GM10248 (cell line): ENCODE measurements at regions of chr3 and their contacts with region 1.

Region 1: GRCh38 chr3:191269289-191270085 is 59.7 kb upstream of the CCDC50 start:
- DNase-seq: peak; percentile 37
- CTCF ChIP-seq: no peak

Region 2: GRCh38 chr3:191282262-191283215 is 13.1 kb after region 1 on chr3:
- CTCF ChIA-PET with region 1: interaction called, 40 read pairs
- POLR2A ChIA-PET with region 1: no interaction called
- DNase-seq: no peak
- CTCF ChIP-seq: no peak